Activated CD4-positive, alpha-beta T cell treated with anti-CD3 and anti-CD28 coated beads for 36 hours (primary cell): ENCODE measurements at regions of chr16 and their contacts with region 1.

Region 1: GRCh38 chr16:4253394-4254150 is 11.7 kb upstream of the SRL start:
- DNase-seq: peak; percentile 100
- ATAC-seq: peak; percentile 98
- H3K4me3 Mint-ChIP-seq: peak overlapping the region; percentile 92
- H3K27ac Mint-ChIP-seq: peak overlapping the region; percentile 96
- H3K4me1 Mint-ChIP-seq: peaks cover 3% of the 10 kb centered on the region
- H3K27me3 Mint-ChIP-seq: no peaks in the 10 kb centered on the region

Region 2: DNA sequence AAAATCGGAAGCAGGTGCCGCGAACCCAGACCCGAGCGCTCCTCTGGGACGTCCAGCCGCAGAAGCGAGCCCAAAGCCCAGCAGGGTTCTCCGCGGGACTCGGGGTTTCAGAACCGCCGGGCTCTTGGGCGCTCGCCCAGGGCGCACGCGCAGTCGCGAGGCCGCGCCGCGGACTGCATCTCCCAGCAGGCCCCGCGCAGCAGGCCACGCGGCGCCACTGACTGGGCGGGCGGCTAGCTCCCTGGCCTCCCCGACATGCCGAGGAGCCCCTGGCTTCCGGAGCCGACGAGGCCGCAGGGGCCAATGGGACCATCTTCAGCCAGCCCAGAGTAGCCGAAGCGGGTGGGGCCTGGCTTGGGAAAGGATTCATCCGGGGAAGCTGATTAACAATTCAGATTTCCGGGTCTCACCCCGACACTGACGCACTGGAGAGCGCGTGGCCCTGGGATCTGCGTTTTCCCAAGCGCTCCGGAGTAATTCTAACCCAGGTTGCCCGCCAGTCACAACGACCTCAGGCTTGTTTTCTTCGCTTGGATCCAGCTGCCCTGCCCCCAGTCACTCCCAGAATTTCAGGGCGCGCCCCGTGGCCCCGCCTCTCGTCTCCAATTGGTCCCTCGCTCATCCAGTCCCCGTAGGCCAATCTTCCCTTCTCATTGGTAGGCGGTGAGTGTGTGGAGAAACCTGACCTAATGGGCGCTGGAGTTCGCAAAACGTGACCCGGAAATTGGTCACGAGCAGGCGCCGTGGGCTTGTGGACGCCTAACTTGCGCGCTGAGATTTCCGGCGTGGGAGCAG is 970.6 kb before region 1 on chr16 and contains the start of gene ZNF263:
- CTCF ChIA-PET with region 1: no interaction called
- POLR2A ChIA-PET with region 1: no interaction called
- intact Hi-C with region 1: loop called in 1 of 2 experiments (anchors 1 kb)
- DNase-seq: peak; percentile 96
- ATAC-seq: peak; percentile 91
- H3K4me3 Mint-ChIP-seq: peak within 1 kb of the TSS; percentile 90
- H3K27ac Mint-ChIP-seq: peak within 1 kb of the TSS; percentile 97
- H3K4me1 Mint-ChIP-seq: peaks cover 24% of the 10 kb centered on the region
- H3K27me3 Mint-ChIP-seq: no peaks in the 10 kb centered on the region
- total RNA-seq, gene ZNF263: 19.2 to 19.6 TPM

Region 3: GRCh38 chr16:3717235-3718018 is 536.1 kb before region 1 on chr16 and contains the start of gene TRAP1:
- CTCF ChIA-PET with region 1: no interaction called
- POLR2A ChIA-PET with region 1: no interaction called
- intact Hi-C with region 1: loop called in 1 of 2 experiments (anchors 1 kb)
- DNase-seq: peak; percentile 95
- ATAC-seq: peak; percentile 95
- H3K4me3 Mint-ChIP-seq: peak within 1 kb of the TSS; percentile 89
- H3K27ac Mint-ChIP-seq: peak within 1 kb of the TSS; percentile 92
- H3K4me1 Mint-ChIP-seq: peaks cover 44% of the 10 kb centered on the region
- H3K27me3 Mint-ChIP-seq: no peaks in the 10 kb centered on the region
- total RNA-seq, gene TRAP1: 306 to 360 TPM

Region 4: GRCh38 chr16:3983081-3983520 is 270.5 kb before region 1 on chr16:
- CTCF ChIA-PET with region 1: interaction called, 11 read pairs
- POLR2A ChIA-PET with region 1: no interaction called
- intact Hi-C with region 1: loop called (anchors 1 to 5 kb)
- DNase-seq: peak; percentile 74
- ATAC-seq: peak; percentile 94
- H3K4me3 Mint-ChIP-seq: no peak overlapping the region
- H3K27ac Mint-ChIP-seq: no peak overlapping the region
- H3K4me1 Mint-ChIP-seq: peaks cover 2% of the 10 kb centered on the region
- H3K27me3 Mint-ChIP-seq: no peaks in the 10 kb centered on the region

Region 5: DNA sequence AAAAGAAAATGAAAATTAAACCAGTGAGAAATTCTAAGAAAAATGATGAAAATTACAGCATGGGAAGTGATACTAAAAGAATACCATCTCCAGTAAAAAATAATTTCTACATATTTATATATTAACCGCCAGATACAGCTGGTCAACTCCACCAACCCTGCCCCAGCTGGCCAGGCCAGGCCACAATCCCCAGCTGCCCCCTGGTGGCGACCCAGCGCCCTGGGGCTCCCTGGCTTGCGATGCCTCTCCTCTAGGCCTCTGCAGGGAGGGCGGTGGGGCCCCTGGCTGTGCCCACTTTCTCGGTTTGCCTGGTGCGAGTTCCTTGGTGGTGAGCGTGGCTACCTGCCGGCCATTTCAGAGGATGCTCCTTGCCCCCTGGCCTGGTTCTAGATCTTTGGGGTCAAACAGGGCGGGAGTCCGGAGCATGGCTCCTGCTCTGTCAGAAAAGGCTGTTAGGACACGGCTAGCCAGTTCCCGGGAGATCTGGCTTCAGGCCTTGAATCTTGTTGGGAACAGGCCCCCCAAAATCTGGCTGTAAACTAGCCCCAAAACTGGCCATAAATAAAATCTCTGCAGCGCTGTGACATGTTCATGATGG is 76.8 kb after region 1 on chr16:
- CTCF ChIA-PET with region 1: interaction called, 11 read pairs
- POLR2A ChIA-PET with region 1: no interaction called
- intact Hi-C with region 1: no loop called
- DNase-seq: peak; percentile 86
- ATAC-seq: peak; percentile 80
- H3K4me3 Mint-ChIP-seq: no peak overlapping the region
- H3K27ac Mint-ChIP-seq: no peak overlapping the region
- H3K4me1 Mint-ChIP-seq: no peaks in the 10 kb centered on the region
- H3K27me3 Mint-ChIP-seq: no peaks in the 10 kb centered on the region

Region 6: GRCh38 chr16:4624015-4624826 is 370.6 kb after region 1 on chr16 and contains the start of gene MGRN1:
- CTCF ChIA-PET with region 1: no interaction called
- POLR2A ChIA-PET with region 1: no interaction called
- intact Hi-C with region 1: loop called in 1 of 2 experiments (anchors 2 kb)
- DNase-seq: peak; percentile 96
- ATAC-seq: peak; percentile 89
- H3K4me3 Mint-ChIP-seq: peak within 1 kb of the TSS; percentile 99
- H3K27ac Mint-ChIP-seq: peak within 1 kb of the TSS; percentile 100
- H3K4me1 Mint-ChIP-seq: peaks cover 38% of the 10 kb centered on the region
- H3K27me3 Mint-ChIP-seq: no peaks in the 10 kb centered on the region
- total RNA-seq, gene MGRN1: 65.0 to 75.4 TPM